Calu3 (cell line): ENCODE measurements at regions of chr6 and their contacts with region 1.

Region 1: GRCh38 chr6:25193460-25194171 is 85.6 kb upstream of the CARMIL1 start:
- DNase-seq: peak; percentile 76
- H3K4me3 Mint-ChIP-seq: peak overlapping the region; percentile 27
- H3K27ac Mint-ChIP-seq: peak overlapping the region; percentile 27
- H3K4me1 Mint-ChIP-seq: peaks cover 27% of the 10 kb centered on the region
- H3K27me3 Mint-ChIP-seq: no peaks in the 10 kb centered on the region
- CTCF ChIP-seq: no peak

Region 2: DNA sequence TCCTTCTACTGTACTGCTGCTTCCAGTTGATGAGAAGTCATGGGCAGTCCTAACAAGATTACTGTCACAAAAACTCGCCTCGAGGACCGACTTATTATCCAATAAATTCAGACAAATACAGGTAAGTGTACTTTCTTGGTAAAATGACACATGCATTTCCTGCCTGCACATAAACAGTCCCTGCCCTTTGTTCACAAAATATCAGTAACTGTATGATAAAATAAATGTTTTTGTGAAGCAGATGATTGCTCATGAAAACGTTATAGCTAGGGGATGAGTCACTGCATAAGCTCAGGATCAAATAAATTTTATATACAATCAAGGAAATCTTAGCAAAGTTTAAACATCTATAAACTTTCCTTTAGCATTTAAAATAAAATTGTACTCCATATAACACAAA is 93.3 kb before region 1 on chr6:
- CTCF ChIA-PET with region 1: interaction called, 14 read pairs
- intact Hi-C with region 1: no loop called
- DNase-seq: no peak
- H3K4me3 Mint-ChIP-seq: no peak overlapping the region
- H3K27ac Mint-ChIP-seq: no peak overlapping the region
- H3K4me1 Mint-ChIP-seq: no peaks in the 10 kb centered on the region
- H3K27me3 Mint-ChIP-seq: peaks cover 46% of the 10 kb centered on the region
- CTCF ChIP-seq: no peak

Region 3: GRCh38 chr6:25181923-25182322 is 11.7 kb before region 1 on chr6:
- CTCF ChIA-PET with region 1: interaction called, 33 read pairs
- intact Hi-C with region 1: no loop called
- DNase-seq: peak; percentile 44
- H3K4me3 Mint-ChIP-seq: no peak overlapping the region
- H3K27ac Mint-ChIP-seq: no peak overlapping the region
- H3K4me1 Mint-ChIP-seq: no peaks in the 10 kb centered on the region
- H3K27me3 Mint-ChIP-seq: peaks cover 5% of the 10 kb centered on the region
- CTCF ChIP-seq: no peak

Region 4: DNA sequence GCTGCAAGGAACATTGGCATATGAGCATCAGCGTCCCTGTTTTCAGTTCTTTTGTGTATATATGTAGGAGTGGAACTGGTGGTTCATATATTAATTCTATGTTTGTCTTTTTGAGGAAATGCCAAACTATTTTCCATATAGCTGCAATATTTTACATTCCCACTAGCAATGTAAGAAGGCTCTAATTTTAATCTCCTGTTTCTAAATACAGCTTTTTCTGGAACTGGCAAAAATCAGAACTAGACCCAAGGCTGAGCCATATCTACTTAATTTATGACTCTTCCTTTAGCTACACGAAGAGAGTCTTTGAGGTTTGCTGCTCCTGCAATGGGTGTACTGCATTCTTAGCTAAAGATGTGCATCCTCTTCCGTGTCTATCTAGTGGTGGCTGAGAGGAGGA is 510.4 kb after region 1 on chr6:
- CTCF ChIA-PET with region 1: interaction called, 11 read pairs
- intact Hi-C with region 1: no loop called
- DNase-seq: no peak
- H3K4me3 Mint-ChIP-seq: no peak overlapping the region
- H3K27ac Mint-ChIP-seq: no peak overlapping the region
- H3K4me1 Mint-ChIP-seq: no peaks in the 10 kb centered on the region
- H3K27me3 Mint-ChIP-seq: peaks cover 13% of the 10 kb centered on the region
- CTCF ChIP-seq: no peak